ENCODE measurements at regions of chr1 and their contacts with region 1.

Region 1: DNA sequence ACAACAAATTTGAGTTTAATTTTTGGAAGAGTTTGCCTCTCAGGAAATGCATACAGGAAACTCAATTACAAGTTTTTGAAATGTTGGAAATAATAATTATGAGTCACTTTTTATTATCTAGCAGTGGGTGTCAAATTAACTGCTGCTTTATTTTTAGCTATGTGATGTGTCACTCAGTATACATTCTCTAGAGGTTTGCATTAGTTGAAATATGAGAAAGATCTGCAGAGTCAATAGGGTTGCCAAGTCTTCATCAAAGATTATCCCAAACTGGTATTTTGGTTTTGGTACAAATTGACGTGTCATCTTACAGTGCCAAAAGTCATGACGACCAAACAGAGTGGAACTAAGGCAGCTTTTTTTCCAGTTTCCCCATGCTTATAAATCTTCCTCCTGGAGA is 54.3 kb upstream of the DIPK1A start:
- DNase-seq: peak; percentile 16 to 99
- H3K4me3 ChIP-seq: peak overlapping the region; percentile 32
- H3K27ac ChIP-seq: peak overlapping the region; percentile 93
- H3K4me1 ChIP-seq: peaks cover 61% of the 10 kb centered on the region
- H3K27me3 ChIP-seq: no peaks in the 10 kb centered on the region
- CTCF ChIP-seq: no peak

Region 2: GRCh38 chr1:93000751-93001175 is 14.8 kb before region 1 on chr1:
- CTCF ChIA-PET with region 1: no interaction called
- POLR2A ChIA-PET with region 1: interaction called, 4 read pairs
- intact Hi-C with region 1: loop called (anchors 1 kb)
- DNase-seq: peak; percentile 41 to 99
- H3K4me3 ChIP-seq: peak overlapping the region; percentile 37; the same call in 1 of the 2 replicates
- H3K27ac ChIP-seq: peak overlapping the region; percentile 88
- H3K4me1 ChIP-seq: peaks cover 75% of the 10 kb centered on the region
- H3K27me3 ChIP-seq: no peaks in the 10 kb centered on the region
- CTCF ChIP-seq: no peak

Region 3: DNA sequence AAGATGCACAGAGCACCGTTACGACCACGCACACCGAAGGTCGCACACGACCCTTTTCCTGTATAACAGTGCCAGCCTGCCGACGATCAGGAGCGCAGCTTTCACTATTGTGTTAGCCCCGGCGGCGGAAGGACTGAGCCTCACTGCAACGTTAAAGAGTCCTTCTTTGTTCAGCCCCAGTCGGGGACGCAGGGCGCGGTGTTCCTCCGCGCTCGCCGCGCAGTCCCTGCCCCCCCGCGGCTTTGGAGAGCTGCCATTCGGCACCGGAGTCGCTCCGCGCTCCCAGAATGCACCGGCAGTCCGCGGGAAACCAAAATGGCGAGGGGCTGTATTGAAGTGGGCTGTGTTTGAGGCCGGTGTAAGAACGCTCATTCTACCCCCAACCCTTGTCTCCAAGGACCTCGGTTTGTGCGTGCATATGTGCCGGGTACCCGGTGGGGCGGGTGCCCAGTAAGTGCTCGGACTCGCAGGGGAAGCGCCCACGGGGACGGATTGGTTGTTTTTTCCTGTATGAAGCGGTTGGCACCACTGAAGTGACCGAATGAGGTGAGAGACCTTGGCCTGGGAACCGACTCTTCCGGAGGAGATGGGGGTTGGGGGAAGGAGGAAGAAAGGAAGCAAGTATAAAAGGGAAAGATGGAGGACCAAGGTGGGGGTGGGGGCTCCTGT is 63.5 kb after region 1 on chr1 and contains the start of gene MTF2:
- CTCF ChIA-PET with region 1: no interaction called
- POLR2A ChIA-PET with region 1: no interaction called
- intact Hi-C with region 1: loop called (anchors 2 kb)
- DNase-seq: peak; percentile 91 to 95
- H3K4me3 ChIP-seq: peak within 1 kb of the TSS; percentile 87
- H3K27ac ChIP-seq: peak within 1 kb of the TSS; percentile 58
- H3K4me1 ChIP-seq: peaks cover 25% of the 10 kb centered on the region
- H3K27me3 ChIP-seq: no peaks in the 10 kb centered on the region
- CTCF ChIP-seq: no peak
- total RNA-seq, gene MTF2: 31.7 and 38.6 TPM in 2 replicates

Measured in PC-9 (cell line).